ENCODE measurements at regions of chrX and their contacts with region 1.

Region 1: DNA sequence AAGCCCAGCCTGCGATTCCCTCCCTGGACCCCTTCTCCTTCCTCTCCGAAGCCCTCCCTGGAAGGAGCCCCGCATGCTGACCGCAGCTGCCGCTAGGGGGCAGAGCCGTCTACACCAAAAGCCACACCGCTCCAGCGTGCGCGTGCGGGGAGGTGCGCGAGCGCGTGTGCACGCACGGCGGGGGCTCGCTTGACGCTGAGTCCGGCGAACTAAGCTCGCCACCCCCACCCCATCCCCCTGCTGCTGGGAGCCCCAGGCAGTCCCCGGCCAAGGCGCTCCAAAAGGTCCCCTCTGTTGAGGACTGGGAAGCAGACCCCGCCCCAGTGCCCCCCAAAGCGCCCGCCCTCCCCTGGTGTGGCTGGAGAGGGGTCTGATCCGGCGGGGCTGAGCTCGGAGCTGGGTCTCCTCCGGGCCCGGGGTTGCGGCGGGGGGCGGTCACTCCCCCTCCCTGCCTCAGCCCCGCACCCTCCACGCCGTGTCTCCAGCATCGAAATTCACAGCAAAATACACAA is 11.0 kb upstream of the CCNQ start:
- DNase-seq: peak; percentile 76 to 82
- H3K4me3 ChIP-seq: peak overlapping the region; percentile 41
- H3K4me3 Mint-ChIP-seq: peak overlapping the region; percentile 65
- H3K27ac Mint-ChIP-seq: no peak overlapping the region
- H3K4me1 ChIP-seq: no peaks in the 10 kb centered on the region
- H3K4me1 Mint-ChIP-seq: no peaks in the 10 kb centered on the region
- H3K27me3 ChIP-seq: no peaks in the 10 kb centered on the region
- H3K27me3 Mint-ChIP-seq: no peaks in the 10 kb centered on the region
- CTCF ChIP-seq: peak; percentile 70 to 86

Region 2: DNA sequence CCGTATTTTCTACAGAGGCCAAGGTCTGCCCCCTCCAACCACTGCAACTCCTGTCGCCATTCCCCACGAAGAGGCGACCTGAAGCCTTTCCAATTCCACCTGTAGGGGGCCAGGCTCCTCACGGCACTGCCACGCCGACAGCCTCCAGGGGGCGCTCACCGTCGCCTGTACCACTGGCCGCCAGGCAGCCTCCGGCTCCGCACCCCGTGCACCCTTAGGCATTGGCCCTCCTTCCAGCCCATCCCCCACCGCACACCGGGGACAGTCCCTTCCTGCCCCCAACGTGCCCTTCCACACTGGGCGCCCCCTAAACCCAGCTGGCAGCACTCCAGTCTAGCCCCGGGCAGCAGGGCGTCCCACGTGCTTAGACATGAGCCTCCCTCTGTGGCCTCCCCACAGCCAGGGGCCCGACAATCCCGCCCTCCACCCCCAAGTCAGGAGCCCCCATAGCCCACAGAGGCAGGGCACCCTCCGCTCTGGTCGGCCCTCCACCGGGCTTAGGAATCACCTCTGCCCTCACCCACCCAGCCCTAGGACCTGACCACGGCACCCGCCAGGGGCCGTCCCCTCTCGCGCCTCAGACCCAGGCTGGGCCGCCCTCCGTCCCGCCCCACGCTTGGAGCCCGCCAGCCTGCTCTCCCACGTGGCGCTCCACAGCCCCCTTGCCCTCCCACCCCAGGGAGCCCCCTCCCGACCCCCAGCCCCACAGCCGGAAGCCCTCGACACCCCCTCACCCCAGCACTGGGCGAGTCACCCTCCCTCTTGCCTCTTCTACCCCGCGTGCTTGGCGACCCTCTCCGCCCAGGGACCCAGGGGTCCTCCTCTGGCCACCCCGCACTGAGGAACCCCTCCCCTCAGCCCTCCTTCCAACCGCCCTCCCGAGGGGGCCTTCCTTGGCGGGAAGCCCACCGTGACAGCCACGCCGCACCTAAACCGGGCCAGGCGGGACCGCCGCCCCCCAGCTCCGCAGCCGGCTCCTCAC is 209.5 kb before region 1 on chrX:
- CTCF ChIA-PET with region 1: no interaction called
- POLR2A ChIA-PET with region 1: no interaction called
- intact Hi-C with region 1: no loop called
- DNase-seq: peak in 1 of 2 experiments; percentile 43
- H3K4me3 ChIP-seq: no peak overlapping the region
- H3K4me3 Mint-ChIP-seq: no peak overlapping the region
- H3K27ac Mint-ChIP-seq: no peak overlapping the region
- H3K4me1 ChIP-seq: no peaks in the 10 kb centered on the region
- H3K4me1 Mint-ChIP-seq: no peaks in the 10 kb centered on the region
- H3K27me3 ChIP-seq: no peaks in the 10 kb centered on the region
- H3K27me3 Mint-ChIP-seq: peaks cover 6% of the 10 kb centered on the region
- CTCF ChIP-seq: peak; percentile 53 to 65

Region 3: GRCh38 chrX:153649178-153649914 is 39.4 kb after region 1 on chrX:
- CTCF ChIA-PET with region 1: interaction called, 3 read pairs
- POLR2A ChIA-PET with region 1: interaction called, 3 read pairs
- intact Hi-C with region 1: loop called (anchors 5 kb)
- DNase-seq: peak; percentile 47
- H3K4me3 ChIP-seq: no peak overlapping the region
- H3K4me3 Mint-ChIP-seq: no peak overlapping the region
- H3K27ac Mint-ChIP-seq: no peak overlapping the region
- H3K4me1 ChIP-seq: peaks cover 24% of the 10 kb centered on the region
- H3K4me1 Mint-ChIP-seq: no peaks in the 10 kb centered on the region
- H3K27me3 ChIP-seq: no peaks in the 10 kb centered on the region
- H3K27me3 Mint-ChIP-seq: no peaks in the 10 kb centered on the region
- CTCF ChIP-seq: peak in 1 of 2 experiments; percentile 47

Region 4: DNA sequence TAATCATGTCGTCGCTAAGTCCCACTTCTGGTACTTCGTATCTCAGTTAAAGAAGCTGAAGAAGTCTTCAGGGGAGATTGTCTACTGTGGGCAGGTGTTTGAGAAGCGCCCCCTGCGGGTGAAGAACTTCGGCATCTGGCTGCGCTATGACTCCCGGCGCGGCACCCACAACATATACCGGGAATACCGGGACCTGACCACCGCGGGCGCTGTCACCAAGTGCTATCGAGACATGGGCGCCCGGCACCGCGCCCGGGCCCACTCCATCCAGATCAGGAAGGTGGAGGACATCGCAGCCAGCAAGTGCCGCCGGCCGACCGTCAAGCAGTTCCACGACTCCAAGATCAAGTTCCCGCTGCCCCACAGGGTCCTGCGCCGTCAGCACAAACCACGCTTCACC is 52.3 kb after region 1 on chrX:
- CTCF ChIA-PET with region 1: interaction called, 18 read pairs
- POLR2A ChIA-PET with region 1: no interaction called
- intact Hi-C with region 1: loop called (anchors 1 kb)
- DNase-seq: peak; percentile 63 to 72
- H3K4me3 ChIP-seq: no peak overlapping the region
- H3K4me3 Mint-ChIP-seq: peak overlapping the region; percentile 31
- H3K27ac Mint-ChIP-seq: no peak overlapping the region
- H3K4me1 ChIP-seq: no peaks in the 10 kb centered on the region
- H3K4me1 Mint-ChIP-seq: no peaks in the 10 kb centered on the region
- H3K27me3 ChIP-seq: no peaks in the 10 kb centered on the region
- H3K27me3 Mint-ChIP-seq: peaks cover 3% of the 10 kb centered on the region
- CTCF ChIP-seq: peak; percentile 34 to 48

Measured in Caco-2 (cell line).